ENCODE measurements at regions of chr12 and their contacts with region 1.

Region 1: DNA sequence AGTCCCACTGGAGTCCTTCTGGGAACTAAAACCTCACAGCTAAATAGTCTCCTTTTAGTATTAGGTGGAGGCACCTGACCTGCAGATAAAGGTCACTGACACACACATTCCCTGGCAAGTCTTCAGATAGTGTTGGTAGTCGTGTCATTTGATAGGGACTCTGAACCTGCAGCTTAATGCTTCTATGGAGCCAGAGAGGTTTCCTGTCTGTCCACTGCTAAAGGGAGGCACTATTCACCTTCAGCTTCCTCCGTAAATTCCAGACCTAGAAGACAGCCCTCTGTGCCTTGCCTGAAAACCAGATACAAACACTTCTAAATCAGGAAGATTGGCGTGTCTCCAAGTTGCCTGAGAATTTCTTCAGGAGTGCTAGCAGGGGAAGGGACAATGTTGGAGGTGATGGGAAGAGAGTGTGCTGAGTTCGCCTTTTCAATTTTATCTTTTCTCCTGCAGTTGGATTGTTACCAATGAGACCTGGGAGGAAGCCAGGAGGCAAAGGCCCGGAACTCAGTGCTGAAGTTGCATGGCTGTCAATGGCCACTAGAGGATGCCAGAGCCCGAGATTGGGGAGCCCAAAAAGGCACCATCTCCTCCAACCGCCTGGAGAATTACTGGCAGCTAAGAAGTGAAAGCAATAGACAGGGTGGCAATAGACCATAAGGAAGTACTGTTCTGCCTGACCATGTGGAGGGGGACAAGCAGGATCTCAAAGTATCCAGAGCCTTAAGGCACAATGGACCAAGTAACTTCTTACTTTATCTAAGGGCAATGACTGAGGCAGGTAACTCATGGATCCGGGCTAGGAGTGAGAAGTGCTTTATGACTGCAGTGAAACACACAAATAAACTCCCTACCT is 81.6 kb upstream of the SCAF11 start:
- DNase-seq: peak; percentile 87
- H3K4me3 Mint-ChIP-seq: no peak overlapping the region
- H3K27ac Mint-ChIP-seq: peak overlapping the region; percentile 47
- H3K4me1 Mint-ChIP-seq: peaks cover 20% of the 10 kb centered on the region
- H3K27me3 Mint-ChIP-seq: no peaks in the 10 kb centered on the region
- CTCF ChIP-seq: peak; percentile 95

Region 2: DNA sequence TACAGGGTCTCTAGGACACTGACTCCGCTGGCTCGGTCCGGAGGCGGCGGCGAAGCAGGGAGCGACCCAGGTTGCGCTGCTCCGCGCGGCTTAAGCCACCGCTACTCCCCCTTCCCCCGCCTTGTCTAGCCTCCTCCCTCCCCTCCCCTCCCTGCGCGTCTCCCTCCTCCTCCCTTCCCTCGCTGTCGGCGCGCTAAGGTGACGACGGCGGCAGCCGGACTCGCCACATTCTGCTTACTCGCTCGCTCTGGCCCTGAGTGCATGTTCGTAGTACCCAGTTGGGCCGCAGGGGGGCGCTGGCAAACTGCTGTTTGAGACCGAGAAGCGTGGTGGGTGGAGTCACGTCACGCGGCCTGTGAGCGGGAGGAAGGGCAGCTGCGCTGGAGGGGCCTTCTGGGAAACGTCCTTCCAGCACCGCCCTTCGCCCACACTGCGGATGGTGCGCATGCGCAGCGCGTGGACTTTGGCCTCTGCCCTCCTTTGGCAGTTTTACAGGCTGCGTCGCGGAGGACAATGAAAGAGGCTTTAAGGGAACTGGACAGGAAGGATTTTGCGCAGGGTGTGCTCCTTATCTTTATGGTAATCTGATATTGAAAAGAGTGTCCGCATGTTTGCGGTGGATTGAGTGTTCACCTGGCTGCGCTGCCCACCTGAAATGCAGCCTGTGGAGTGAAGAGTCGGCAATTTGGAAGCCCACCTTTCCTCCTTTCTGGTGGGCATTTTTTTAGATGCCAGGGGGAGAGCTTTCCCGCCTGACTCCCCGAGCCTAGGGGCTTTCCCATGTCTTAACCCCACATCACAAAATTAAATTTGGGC is 81.3 kb before region 1 on chr12 and contains the start of gene SCAF11:
- CTCF ChIA-PET with region 1: interaction called, 8 read pairs
- POLR2A ChIA-PET with region 1: interaction called, 29 read pairs
- intact Hi-C with region 1: loop called (anchors 2 kb)
- DNase-seq: peak; percentile 99
- H3K4me3 Mint-ChIP-seq: peak within 1 kb of the TSS; percentile 91
- H3K27ac Mint-ChIP-seq: peak within 1 kb of the TSS; percentile 93
- H3K4me1 Mint-ChIP-seq: peaks cover 31% of the 10 kb centered on the region
- H3K27me3 Mint-ChIP-seq: no peaks in the 10 kb centered on the region
- CTCF ChIP-seq: peak; percentile 85
- total RNA-seq, gene SCAF11: 106 and 107 TPM in 2 replicates

Region 3: GRCh38 chr12:46108721-46109120 is 36.7 kb after region 1 on chr12:
- CTCF ChIA-PET with region 1: interaction called, 12 read pairs
- POLR2A ChIA-PET with region 1: interaction called, 3 read pairs
- intact Hi-C with region 1: no loop called
- DNase-seq: no peak
- H3K4me3 Mint-ChIP-seq: no peak overlapping the region
- H3K27ac Mint-ChIP-seq: peak overlapping the region; percentile 89
- H3K4me1 Mint-ChIP-seq: peaks cover 15% of the 10 kb centered on the region
- H3K27me3 Mint-ChIP-seq: no peaks in the 10 kb centered on the region
- CTCF ChIP-seq: no peak